ENCODE measurements at regions of chr12 and their contacts with region 1.

Region 1: DNA sequence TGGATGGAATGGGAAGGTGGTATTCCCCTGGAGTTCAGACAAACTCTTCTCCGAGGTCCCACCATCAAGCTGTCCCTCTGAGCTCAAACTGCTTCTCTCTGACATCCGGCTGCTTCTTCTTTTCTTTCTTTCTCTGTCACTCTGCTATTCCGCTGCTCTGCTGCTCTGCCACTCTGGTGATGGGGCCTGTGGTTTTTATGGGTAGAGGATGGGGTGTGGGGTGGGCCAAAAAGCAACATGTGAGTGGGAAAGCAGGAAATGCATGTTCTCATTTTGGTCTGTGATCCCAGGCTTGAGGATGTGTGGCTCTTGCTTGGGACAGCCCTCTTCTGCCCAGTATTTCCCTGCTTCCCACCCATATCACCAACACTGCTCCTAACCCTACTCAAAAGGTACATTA is 30.6 kb downstream of the CLECL1 start:
- DNase-seq: peak in 8 of 9 donors; percentile 44 to 78 (median 70)
- ATAC-seq: peak; percentile 79
- H3K4me3 ChIP-seq: peak overlapping the region; percentile 27
- H3K4me3 Mint-ChIP-seq: peak overlapping the region; percentile 65 to 85 (median 80)
- H3K27ac ChIP-seq: peak overlapping the region; percentile 61
- H3K27ac Mint-ChIP-seq: peak overlapping the region; percentile 83 to 97 (median 94)
- H3K4me1 ChIP-seq: peaks cover 36 to 42% of the 10 kb centered on the region in 2 donors
- H3K4me1 Mint-ChIP-seq: peaks cover 45 to 89% (median 85%) of the 10 kb centered on the region in 7 donors
- H3K27me3 ChIP-seq: no peaks in the 10 kb centered on the region
- H3K27me3 Mint-ChIP-seq: no peaks in the 10 kb centered on the region

Region 2: GRCh38 chr12:9687228-9687627 is 15.0 kb before region 1 on chr12:
- CTCF ChIA-PET with region 1: interaction called, 4 read pairs
- POLR2A ChIA-PET with region 1: interaction called, 28 read pairs
- intact Hi-C with region 1: no loop called
- DNase-seq: no peak
- ATAC-seq: no peak
- H3K4me3 ChIP-seq: no peak overlapping the region
- H3K4me3 Mint-ChIP-seq: peak overlapping the region in 8 of 10 donors; percentile 21 to 89 (median 34)
- H3K27ac ChIP-seq: peak overlapping the region; percentile 40
- H3K27ac Mint-ChIP-seq: peak overlapping the region in 7 of 9 donors; percentile 5 to 83 (median 67)
- H3K4me1 ChIP-seq: peaks cover 26 to 41% of the 10 kb centered on the region in 2 donors
- H3K4me1 Mint-ChIP-seq: peaks cover 34 to 89% (median 77%) of the 10 kb centered on the region in 7 donors
- H3K27me3 ChIP-seq: no peaks in the 10 kb centered on the region
- H3K27me3 Mint-ChIP-seq: no peaks in the 10 kb centered on the region